Endothelial cell of umbilical vein (primary cell): ENCODE measurements at regions of chr16 and their contacts with region 1.

Region 1: GRCh38 chr16:53892155-53892554 is 188.2 kb downstream of the FTO start:
- DNase-seq: peak; percentile 72
- H3K4me3 ChIP-seq: no peak overlapping the region
- H3K27ac ChIP-seq: no peak overlapping the region
- H3K4me1 ChIP-seq: peaks cover 23% of the 10 kb centered on the region
- H3K27me3 ChIP-seq: no peaks in the 10 kb centered on the region
- CTCF ChIP-seq: peak; percentile 57 to 66
- POLR2A ChIP-seq: no peak

Region 2: DNA sequence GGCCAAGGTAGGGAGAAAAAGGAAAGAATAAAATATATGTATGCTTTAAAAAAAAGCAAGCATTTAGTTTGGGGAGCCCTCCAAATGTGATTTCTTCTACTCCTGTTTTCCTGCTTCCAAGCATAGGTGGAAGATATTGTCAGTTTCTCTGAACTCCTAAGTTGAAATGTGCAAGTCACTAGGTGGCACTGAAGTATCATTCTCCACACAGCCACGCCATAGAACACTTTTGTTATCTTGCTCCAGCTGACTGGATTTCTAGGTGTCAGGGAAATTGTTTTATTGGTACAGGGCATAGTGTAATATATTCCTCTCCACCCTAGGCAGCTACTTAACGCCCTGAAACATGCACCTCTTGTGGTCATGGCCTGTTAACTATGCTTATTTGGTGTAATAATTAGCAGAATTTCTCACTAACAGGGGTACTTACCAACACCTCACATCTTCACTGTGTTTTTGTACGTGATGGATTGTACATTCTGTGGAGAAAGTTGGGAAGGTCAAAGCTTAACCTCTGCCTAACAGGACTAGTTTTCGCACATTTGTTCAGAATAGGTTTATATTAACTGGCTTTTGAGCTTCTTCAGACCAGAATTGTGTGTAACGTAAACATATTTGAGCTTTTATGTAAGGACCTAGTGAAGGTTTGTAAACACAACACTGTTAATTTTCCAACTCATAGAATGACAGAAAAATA is 118.9 kb before region 1 on chr16:
- CTCF ChIA-PET with region 1: interaction called, 36 read pairs
- POLR2A ChIA-PET with region 1: no interaction called
- dilution Hi-C with region 1: no loop called
- intact Hi-C with region 1: loop called (anchors 2 kb)
- DNase-seq: peak; percentile 79
- H3K4me3 ChIP-seq: no peak overlapping the region
- H3K27ac ChIP-seq: no peak overlapping the region
- H3K4me1 ChIP-seq: peaks cover 7% of the 10 kb centered on the region
- H3K27me3 ChIP-seq: no peaks in the 10 kb centered on the region
- CTCF ChIP-seq: peak; percentile 35 to 56
- POLR2A ChIP-seq: no peak

Region 3: DNA sequence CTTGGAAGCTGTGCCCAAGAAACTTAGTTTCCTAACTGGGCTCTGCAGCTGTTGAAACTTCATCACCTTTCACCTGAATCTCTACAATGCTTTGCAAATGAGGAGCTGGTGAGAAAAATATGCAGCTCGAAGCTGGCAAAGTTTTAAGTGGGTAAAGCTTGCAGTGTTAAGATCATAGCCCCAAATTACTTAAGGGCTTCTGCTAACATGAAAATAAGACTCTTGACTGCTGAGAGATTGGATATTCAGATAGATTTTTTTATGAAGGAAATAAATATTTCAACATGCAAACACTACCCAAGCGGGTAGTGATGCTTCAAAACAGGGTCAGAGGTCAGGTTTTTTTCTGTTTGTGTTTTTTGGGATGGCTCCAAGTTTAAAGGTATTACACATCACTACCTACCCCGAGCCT is 90.5 kb after region 1 on chr16:
- CTCF ChIA-PET with region 1: no interaction called
- POLR2A ChIA-PET with region 1: no interaction called
- dilution Hi-C with region 1: no loop called
- intact Hi-C with region 1: no loop called
- DNase-seq: no peak
- H3K4me3 ChIP-seq: no peak overlapping the region
- H3K27ac ChIP-seq: no peak overlapping the region
- H3K4me1 ChIP-seq: no peaks in the 10 kb centered on the region
- H3K27me3 ChIP-seq: no peaks in the 10 kb centered on the region
- CTCF ChIP-seq: no peak
- POLR2A ChIP-seq: no peak

Region 4: GRCh38 chr16:54286090-54286993 is 394.2 kb after region 1 on chr16 and contains the start of gene IRX3:
- CTCF ChIA-PET with region 1: interaction called, 6 read pairs
- POLR2A ChIA-PET with region 1: no interaction called
- dilution Hi-C with region 1: no loop called
- intact Hi-C with region 1: loop called (anchors 5 kb)
- DNase-seq: peak; percentile 22
- H3K4me3 ChIP-seq: peak within 1 kb of the TSS; percentile 37 to 50 (median 42)
- H3K27ac ChIP-seq: no peak within 1 kb of the TSS
- H3K4me1 ChIP-seq: peaks cover 8% of the 10 kb centered on the region
- H3K27me3 ChIP-seq: peaks cover 76 to 94% of the 10 kb centered on the region in 2 experiments
- CTCF ChIP-seq: no peak
- POLR2A ChIP-seq: no peak
- total RNA-seq, gene IRX3: not detected in 2 replicates

Region 5: DNA sequence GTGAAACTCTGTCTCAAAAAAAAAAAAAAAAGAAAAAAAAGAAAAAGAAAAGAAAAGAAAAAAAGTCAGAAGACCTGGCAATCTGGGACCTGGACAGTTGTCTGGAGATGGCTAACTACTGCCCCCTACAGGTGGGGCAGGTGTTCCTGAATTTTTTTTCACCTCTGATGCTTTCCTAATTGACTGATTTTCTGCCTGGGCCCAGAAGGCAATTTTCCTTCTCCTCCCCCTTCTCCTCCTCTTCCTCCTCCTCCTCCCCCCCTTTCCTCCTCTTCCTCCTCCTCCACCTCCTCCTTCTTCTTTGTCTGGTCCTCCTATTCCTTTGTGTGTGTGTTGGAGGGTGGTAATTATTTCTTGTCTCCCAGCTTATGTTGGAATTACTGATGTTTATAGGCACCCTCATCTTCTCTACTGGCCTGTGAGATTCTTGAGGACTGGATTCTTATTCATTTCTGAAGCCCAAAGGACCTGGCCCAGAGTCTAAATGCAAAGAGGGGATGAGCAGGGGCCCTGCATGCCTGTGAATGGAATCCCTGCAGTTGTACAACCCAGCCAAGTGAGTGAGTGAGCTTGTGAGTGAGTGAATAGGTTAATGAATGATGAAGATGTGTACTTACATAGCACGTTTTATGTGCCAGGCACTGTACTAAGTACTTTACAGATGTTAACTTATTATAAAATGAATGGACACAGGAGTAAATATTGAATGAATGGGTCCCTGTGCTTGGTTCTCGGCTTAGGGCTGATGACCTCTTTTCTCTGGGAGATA is 1065.4 kb after region 1 on chr16:
- CTCF ChIA-PET with region 1: no interaction called
- POLR2A ChIA-PET with region 1: no interaction called
- dilution Hi-C with region 1: no loop called
- intact Hi-C with region 1: loop called (anchors 2 kb)
- DNase-seq: no peak
- H3K4me3 ChIP-seq: no peak overlapping the region
- H3K27ac ChIP-seq: no peak overlapping the region
- H3K4me1 ChIP-seq: no peaks in the 10 kb centered on the region
- H3K27me3 ChIP-seq: no peaks in the 10 kb centered on the region
- CTCF ChIP-seq: peak; percentile 30 to 44
- POLR2A ChIP-seq: no peak